ENCODE measurements at regions of chr1 and their contacts with region 1.

Region 1: GRCh38 chr1:50620680-50621329 is 197.6 kb upstream of the DMRTA2 start:
- DNase-seq: peak; percentile 91
- H3K4me3 ChIP-seq: peak overlapping the region; percentile 16 to 23 (median 17)
- H3K27ac ChIP-seq: peak overlapping the region; percentile 79
- H3K4me1 ChIP-seq: peaks cover 15% of the 10 kb centered on the region
- H3K27me3 ChIP-seq: no peaks in the 10 kb centered on the region
- CTCF ChIP-seq: peak; percentile 76

Region 2: GRCh38 chr1:50704126-50704525 is 83.3 kb after region 1 on chr1:
- CTCF ChIA-PET with region 1: interaction called, 8 read pairs
- dilution Hi-C with region 1: no loop called
- in situ Hi-C with region 1: no loop called
- intact Hi-C with region 1: loop called (anchors 1 kb)
- DNase-seq: peak; percentile 26
- H3K4me3 ChIP-seq: no peak overlapping the region
- H3K27ac ChIP-seq: no peak overlapping the region
- H3K4me1 ChIP-seq: peaks cover 15% of the 10 kb centered on the region
- H3K27me3 ChIP-seq: no peaks in the 10 kb centered on the region
- CTCF ChIP-seq: peak; percentile 74 to 80

Region 3: GRCh38 chr1:50735443-50735842 is 114.6 kb after region 1 on chr1:
- CTCF ChIA-PET with region 1: no interaction called
- dilution Hi-C with region 1: no loop called
- in situ Hi-C with region 1: no loop called
- intact Hi-C with region 1: loop called (anchors 2 kb)
- DNase-seq: no peak
- H3K4me3 ChIP-seq: no peak overlapping the region
- H3K27ac ChIP-seq: no peak overlapping the region
- H3K4me1 ChIP-seq: no peaks in the 10 kb centered on the region
- H3K27me3 ChIP-seq: no peaks in the 10 kb centered on the region
- CTCF ChIP-seq: peak; percentile 49